Spleen (tissue), 13 donors: ENCODE measurements at regions of chr17 and their contacts with region 1.

Region 1: GRCh38 chr17:74659898-74660297 is 36.4 kb upstream of the CD300E start:
- DNase-seq: no peak
- H3K4me3 ChIP-seq: no peak overlapping the region
- H3K27ac ChIP-seq: no peak overlapping the region
- H3K4me1 ChIP-seq: peaks cover 0 to 7% (median 5%) of the 10 kb centered on the region in 6 donors
- H3K27me3 ChIP-seq: peaks cover 0 to 78% (median 15%) of the 10 kb centered on the region in 7 donors
- CTCF ChIP-seq: no peak
- POLR2A ChIP-seq: no peak

Region 2: DNA sequence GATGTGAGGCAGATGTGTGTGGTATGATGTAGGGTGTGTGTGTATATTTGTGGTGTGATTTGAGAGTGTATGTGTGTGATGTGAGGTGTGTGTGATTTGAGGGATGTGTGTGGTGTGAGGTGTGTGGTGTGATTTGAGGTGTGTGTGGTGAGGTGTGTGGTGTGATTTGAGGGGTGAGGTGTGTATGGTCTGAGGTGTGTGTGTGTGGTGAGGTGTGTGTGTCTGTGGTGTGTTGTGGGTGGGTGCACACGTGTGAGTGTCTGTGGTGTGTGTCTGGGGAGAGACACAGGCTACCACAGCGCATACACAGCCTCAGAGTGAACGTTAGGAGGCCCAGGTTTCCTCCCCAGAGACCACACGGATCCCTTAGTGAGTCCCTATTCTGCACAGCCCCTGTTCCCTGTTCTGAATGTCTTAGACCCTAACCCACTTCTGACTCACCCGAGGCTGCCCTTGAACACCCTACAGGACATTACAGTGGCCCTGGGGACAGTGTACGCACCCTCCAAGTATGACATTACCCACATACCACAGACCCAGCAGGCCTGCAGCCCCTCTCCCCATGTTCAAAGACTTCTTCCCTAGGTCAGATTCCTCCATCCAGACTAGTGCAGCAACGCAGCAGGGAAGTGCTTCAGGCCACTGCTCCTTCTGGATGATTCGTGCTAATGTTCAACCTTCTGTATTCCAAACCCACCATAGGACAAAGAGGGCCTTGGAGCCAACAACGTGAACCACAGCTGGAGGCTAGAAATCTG is 73.6 kb after region 1 on chr17:
- intact Hi-C with region 1: loop called (anchors 2 kb)
- DNase-seq: peak; percentile 35
- H3K4me3 ChIP-seq: no peak overlapping the region
- H3K27ac ChIP-seq: no peak overlapping the region
- H3K4me1 ChIP-seq: peaks cover 22 to 63% (median 50%) of the 10 kb centered on the region in 6 donors
- H3K27me3 ChIP-seq: peaks cover 0 to 25% (median 0%) of the 10 kb centered on the region in 7 donors
- CTCF ChIP-seq: no peak
- POLR2A ChIP-seq: no peak

Region 3: DNA sequence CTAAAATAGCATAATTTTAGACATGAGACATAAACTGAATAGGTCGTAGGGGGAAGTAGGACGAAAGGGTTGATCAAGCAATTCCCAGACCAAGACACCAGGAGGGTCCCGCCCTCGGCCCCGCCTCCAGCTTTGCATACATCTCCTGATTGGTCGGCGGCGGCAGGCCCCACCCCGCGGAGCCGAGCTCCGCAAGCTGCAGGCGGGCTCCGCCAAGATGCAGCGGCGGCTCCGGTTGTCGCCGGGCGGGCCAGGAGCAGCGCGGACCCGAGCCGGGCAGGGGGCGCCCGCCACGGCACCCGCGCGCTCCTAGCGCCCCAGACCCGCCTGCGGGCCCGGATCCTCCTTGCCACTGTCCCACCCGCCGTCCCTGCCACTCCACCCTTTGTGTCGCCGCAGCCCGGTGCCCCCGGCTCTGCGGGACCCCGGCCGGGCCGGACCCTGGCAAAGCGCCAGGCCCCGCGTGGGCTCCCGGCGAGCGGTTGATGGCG is 327.6 kb after region 1 on chr17 and contains the start of gene CDR2L:
- intact Hi-C with region 1: no loop called
- DNase-seq: peak; percentile 98
- H3K4me3 ChIP-seq: peak within 1 kb of the TSS; percentile 44 to 85 (median 78)
- H3K27ac ChIP-seq: peak within 1 kb of the TSS; percentile 40 to 84 (median 78)
- H3K4me1 ChIP-seq: peaks cover 4 to 42% (median 21%) of the 10 kb centered on the region in 6 donors
- H3K27me3 ChIP-seq: peaks cover 0 to 27% (median 4%) of the 10 kb centered on the region in 7 donors
- CTCF ChIP-seq: peak in 2 of 11 experiments; percentile 29 to 34
- POLR2A ChIP-seq: no peak
- total RNA-seq, gene CDR2L: 1.5 to 6.0 (median 3.0) TPM